ENCODE measurements at regions of chr21 and their contacts with region 1.

Region 1: GRCh38 chr21:31548688-31549087 is 110.8 kb upstream of the SOD1 start:
- DNase-seq: no peak
- H3K4me3 ChIP-seq: no peak overlapping the region
- H3K27ac ChIP-seq: no peak overlapping the region
- H3K4me1 ChIP-seq: peaks cover 5 to 14% (median 8%) of the 10 kb centered on the region in 4 experiments
- H3K27me3 ChIP-seq: no peaks in the 10 kb centered on the region
- CTCF ChIP-seq: peak in 2 of 3 experiments; percentile 28 to 45; a peak in 3 of 4 replicates
- EP300 ChIP-seq: no peak
- POLR2A ChIP-seq: no peak
- RAD21 ChIP-seq: peak; percentile 48 to 69

Region 2: GRCh38 chr21:31473685-31474345 is 74.9 kb before region 1 on chr21:
- CTCF ChIA-PET with region 1: no interaction called
- POLR2A ChIA-PET with region 1: no interaction called
- DNase-seq: no peak
- H3K4me3 ChIP-seq: no peak overlapping the region
- H3K27ac ChIP-seq: no peak overlapping the region
- H3K4me1 ChIP-seq: peaks cover 3 to 7% (median 5%) of the 10 kb centered on the region in 4 experiments
- H3K27me3 ChIP-seq: no peaks in the 10 kb centered on the region
- CTCF ChIP-seq: no peak
- EP300 ChIP-seq: no peak
- POLR2A ChIP-seq: no peak
- RAD21 ChIP-seq: no peak

Region 3: DNA sequence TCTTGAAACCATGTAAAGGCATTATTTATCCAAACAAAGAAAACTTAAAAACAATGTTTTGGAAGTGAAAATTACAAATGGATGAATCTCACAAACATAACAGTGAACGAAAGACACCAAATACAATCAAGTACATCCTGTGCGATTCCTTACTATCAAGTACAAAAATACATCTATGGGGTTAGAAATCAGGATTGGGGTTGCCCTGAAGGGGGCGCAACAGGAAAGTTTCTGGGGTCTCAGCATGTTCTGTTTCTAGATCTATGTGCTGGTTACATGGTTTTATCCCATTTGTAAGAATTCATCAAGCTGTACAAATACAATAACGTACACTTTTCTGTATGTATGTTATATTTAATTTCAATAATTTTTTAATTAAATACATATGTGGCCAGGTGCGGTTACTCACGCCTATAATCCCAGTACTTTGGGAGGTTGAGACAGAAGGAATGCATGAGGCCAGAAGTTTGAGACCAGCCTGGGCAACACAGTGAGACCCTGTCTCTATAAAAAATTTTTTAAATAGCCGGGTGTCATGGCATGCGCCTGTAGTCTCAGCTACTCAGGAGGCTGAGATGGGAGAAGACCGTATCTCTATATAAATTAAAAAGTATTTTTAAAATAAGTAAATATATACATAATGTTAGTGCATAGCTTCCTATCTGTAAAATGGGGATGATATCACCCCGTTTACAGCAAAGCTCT is 10.7 kb before region 1 on chr21:
- CTCF ChIA-PET with region 1: interaction called, 23 read pairs
- POLR2A ChIA-PET with region 1: interaction called, 3 read pairs
- DNase-seq: peak in 1 of 2 experiments; percentile 77
- H3K4me3 ChIP-seq: no peak overlapping the region
- H3K27ac ChIP-seq: no peak overlapping the region
- H3K4me1 ChIP-seq: no peaks in the 10 kb centered on the region
- H3K27me3 ChIP-seq: no peaks in the 10 kb centered on the region
- CTCF ChIP-seq: peak; percentile 17 to 78 (median 65)
- EP300 ChIP-seq: no peak
- POLR2A ChIP-seq: no peak
- RAD21 ChIP-seq: peak; percentile 67 to 75

Region 4: DNA sequence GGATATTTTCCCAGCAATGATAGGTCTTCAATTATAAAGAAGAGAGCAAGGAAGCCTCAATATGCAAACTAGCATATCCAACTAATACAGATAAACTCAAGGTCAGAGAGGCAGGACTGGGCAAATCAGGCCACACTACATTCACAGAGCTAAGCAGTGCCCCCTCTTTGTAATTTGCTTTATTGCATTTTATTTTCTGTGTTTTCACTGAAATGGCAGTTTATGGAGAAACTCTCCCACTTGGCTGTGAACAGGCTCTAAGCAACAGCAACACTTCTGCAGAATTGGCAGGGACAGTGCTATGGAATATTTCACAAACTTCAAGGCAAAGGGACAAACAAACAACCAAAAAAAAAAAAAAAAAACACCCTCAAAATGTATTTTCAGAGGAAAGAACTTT is 17.4 kb after region 1 on chr21:
- CTCF ChIA-PET with region 1: interaction called, 12 read pairs
- POLR2A ChIA-PET with region 1: interaction called, 97 read pairs
- DNase-seq: no peak
- H3K4me3 ChIP-seq: no peak overlapping the region
- H3K27ac ChIP-seq: no peak overlapping the region
- H3K4me1 ChIP-seq: peaks cover 0 to 14% (median 8%) of the 10 kb centered on the region in 4 experiments; a peak in 6 of 7 replicates
- H3K27me3 ChIP-seq: no peaks in the 10 kb centered on the region
- CTCF ChIP-seq: peak in 2 of 3 experiments; percentile 32 to 36; a peak in 2 of 4 replicates
- EP300 ChIP-seq: no peak
- POLR2A ChIP-seq: no peak
- RAD21 ChIP-seq: peak; percentile 37 to 48

Region 5: DNA sequence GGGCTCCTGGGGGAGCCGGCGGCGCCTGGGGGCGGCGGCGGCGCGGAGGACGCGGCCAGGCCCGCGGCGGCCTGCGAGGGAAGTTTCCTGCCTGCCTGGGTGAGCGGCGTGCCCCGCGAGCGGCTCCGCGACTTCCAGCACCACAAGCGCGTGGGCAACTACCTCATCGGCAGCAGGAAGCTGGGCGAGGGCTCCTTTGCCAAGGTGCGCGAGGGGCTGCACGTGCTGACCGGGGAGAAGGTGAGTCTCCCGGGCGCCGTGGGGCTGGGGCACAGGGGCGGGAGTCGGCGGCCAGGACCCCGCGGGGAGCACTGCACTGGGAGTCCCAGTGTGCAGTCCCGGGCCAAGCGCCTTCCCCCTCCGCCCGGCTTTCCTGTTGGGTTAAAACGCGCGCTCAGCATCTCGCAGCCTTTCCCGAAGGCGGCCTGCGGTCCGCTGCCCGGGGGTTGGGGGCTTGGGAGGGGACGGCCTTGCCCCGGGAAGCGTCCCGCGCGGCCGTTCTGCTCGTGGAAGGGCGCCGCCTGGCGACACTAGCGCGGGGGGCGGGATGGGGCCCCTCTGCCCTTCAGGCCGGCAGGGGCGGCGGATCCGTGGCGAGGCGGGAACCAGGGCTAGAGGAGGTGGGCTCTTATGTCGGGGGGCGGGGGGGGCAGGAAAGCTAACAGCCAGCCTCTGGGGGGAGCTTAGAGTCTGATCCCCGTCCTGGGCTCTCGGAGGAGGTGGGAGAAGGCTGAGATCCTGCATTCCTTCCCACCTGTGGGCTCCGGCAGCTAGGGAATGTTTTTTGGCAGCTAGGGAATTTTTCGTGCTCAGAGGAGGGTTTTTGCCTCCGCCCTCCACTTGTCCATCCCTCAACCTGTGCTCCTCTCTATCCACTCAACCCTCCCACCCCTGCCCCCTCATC is 325.3 kb after region 1 on chr21:
- CTCF ChIA-PET with region 1: no interaction called
- POLR2A ChIA-PET with region 1: no interaction called
- DNase-seq: peak in 1 of 2 experiments; percentile 89
- H3K4me3 ChIP-seq: peak overlapping the region; percentile 58 to 86 (median 68)
- H3K27ac ChIP-seq: no peak overlapping the region
- H3K4me1 ChIP-seq: peaks cover 4 to 17% (median 7%) of the 10 kb centered on the region in 4 experiments
- H3K27me3 ChIP-seq: peaks cover 0 to 9% (median 7%) of the 10 kb centered on the region in 4 experiments; a peak in 4 of 7 replicates
- CTCF ChIP-seq: peak; percentile 54 to 75 (median 65)
- EP300 ChIP-seq: no peak
- POLR2A ChIP-seq: no peak
- RAD21 ChIP-seq: peak; percentile 32 to 61; a peak in 2 of 4 replicates

Measured in H1 (cell line).